Caco-2 (cell line): ENCODE measurements at regions of chr3 and their contacts with region 1.

Region 1: DNA sequence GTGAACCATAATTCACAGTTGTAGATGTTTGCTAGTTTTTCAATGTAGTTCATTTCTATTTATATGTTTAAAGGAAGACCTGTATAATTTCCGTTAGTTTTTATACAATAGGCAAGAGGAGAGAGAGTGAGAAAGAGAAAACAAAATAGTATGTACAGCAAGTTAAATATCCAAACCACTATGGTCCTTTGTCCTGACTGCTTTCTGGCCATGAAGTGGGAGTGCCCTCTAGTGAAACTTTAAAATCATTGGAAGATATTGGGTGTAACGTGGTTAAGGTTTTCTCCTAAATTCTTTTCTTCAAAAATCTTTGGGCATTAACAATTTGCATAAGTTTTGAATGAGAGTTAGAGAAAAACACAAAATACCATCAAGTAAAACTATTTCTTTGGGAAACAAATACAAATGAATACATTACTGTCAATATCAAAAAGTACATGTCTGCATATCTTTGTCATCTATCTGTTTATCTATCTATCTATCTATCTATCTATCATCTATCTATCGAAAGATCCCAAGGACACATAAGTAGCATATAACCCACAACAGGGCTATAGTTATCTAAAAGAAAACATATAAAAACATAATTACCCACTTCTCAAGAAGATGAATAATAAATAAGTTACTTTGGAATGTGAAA is 534.6 kb upstream of the ATP11B start:
- DNase-seq: peak in 1 of 2 experiments; percentile 58
- H3K4me3 ChIP-seq: no peak overlapping the region
- H3K4me3 Mint-ChIP-seq: no peak overlapping the region
- H3K27ac Mint-ChIP-seq: no peak overlapping the region
- H3K4me1 ChIP-seq: no peaks in the 10 kb centered on the region; the same call in 1 of the 2 replicates
- H3K4me1 Mint-ChIP-seq: peaks cover 6% of the 10 kb centered on the region
- H3K27me3 ChIP-seq: no peaks in the 10 kb centered on the region
- H3K27me3 Mint-ChIP-seq: no peaks in the 10 kb centered on the region
- CTCF ChIP-seq: peak; percentile 66 to 68

Region 2: GRCh38 chr3:181726351-181727330 is 532.0 kb before region 1 on chr3:
- CTCF ChIA-PET with region 1: no interaction called
- POLR2A ChIA-PET with region 1: no interaction called
- intact Hi-C with region 1: loop called (anchors 1 kb)
- DNase-seq: peak; percentile 55 to 79
- H3K4me3 ChIP-seq: peak overlapping the region; percentile 38
- H3K4me3 Mint-ChIP-seq: peak overlapping the region; percentile 84
- H3K27ac Mint-ChIP-seq: peak overlapping the region; percentile 67
- H3K4me1 ChIP-seq: peaks cover 10% of the 10 kb centered on the region
- H3K4me1 Mint-ChIP-seq: no peaks in the 10 kb centered on the region
- H3K27me3 ChIP-seq: no peaks in the 10 kb centered on the region
- H3K27me3 Mint-ChIP-seq: no peaks in the 10 kb centered on the region
- CTCF ChIP-seq: peak; percentile 34 to 65

Region 3: DNA sequence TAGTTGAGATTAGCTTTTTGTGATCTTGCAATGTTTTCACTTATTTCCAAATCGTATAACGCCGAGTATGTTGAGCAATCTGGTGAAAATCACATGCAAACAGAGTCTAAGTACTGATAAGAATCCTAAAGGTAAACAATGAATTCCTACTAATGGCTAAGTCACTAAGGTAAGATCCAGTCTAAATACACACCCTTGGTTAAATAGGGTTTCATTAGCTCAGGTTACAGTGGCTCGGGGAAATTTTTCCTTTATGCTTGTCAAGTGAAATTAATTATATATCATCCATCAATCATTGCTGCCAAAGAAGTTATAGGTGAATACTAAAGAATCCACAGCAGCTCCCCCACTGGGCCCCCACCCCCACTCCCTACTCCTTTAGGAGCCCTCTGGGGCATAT is 407.6 kb before region 1 on chr3:
- CTCF ChIA-PET with region 1: no interaction called
- POLR2A ChIA-PET with region 1: no interaction called
- intact Hi-C with region 1: loop called (anchors 1 kb)
- DNase-seq: peak; percentile 61 to 69
- H3K4me3 ChIP-seq: no peak overlapping the region
- H3K4me3 Mint-ChIP-seq: peak overlapping the region; percentile 35
- H3K27ac Mint-ChIP-seq: peak overlapping the region; percentile 87
- H3K4me1 ChIP-seq: peaks cover 26% of the 10 kb centered on the region
- H3K4me1 Mint-ChIP-seq: peaks cover 22% of the 10 kb centered on the region
- H3K27me3 ChIP-seq: no peaks in the 10 kb centered on the region
- H3K27me3 Mint-ChIP-seq: no peaks in the 10 kb centered on the region
- CTCF ChIP-seq: no peak

Region 4: GRCh38 chr3:181872889-181873288 is 385.8 kb before region 1 on chr3:
- CTCF ChIA-PET with region 1: no interaction called
- POLR2A ChIA-PET with region 1: no interaction called
- intact Hi-C with region 1: loop called (anchors 5 kb)
- DNase-seq: no peak
- H3K4me3 ChIP-seq: no peak overlapping the region
- H3K4me3 Mint-ChIP-seq: no peak overlapping the region
- H3K27ac Mint-ChIP-seq: no peak overlapping the region
- H3K4me1 ChIP-seq: peaks cover 10% of the 10 kb centered on the region
- H3K4me1 Mint-ChIP-seq: peaks cover 17% of the 10 kb centered on the region
- H3K27me3 ChIP-seq: no peaks in the 10 kb centered on the region
- H3K27me3 Mint-ChIP-seq: no peaks in the 10 kb centered on the region
- CTCF ChIP-seq: no peak

Region 5: GRCh38 chr3:181948286-181948685 is 310.4 kb before region 1 on chr3:
- CTCF ChIA-PET with region 1: no interaction called
- POLR2A ChIA-PET with region 1: no interaction called
- intact Hi-C with region 1: loop called (anchors 1 kb)
- DNase-seq: peak in 1 of 2 experiments; percentile 25
- H3K4me3 ChIP-seq: no peak overlapping the region
- H3K4me3 Mint-ChIP-seq: no peak overlapping the region
- H3K27ac Mint-ChIP-seq: no peak overlapping the region
- H3K4me1 ChIP-seq: peaks cover 8% of the 10 kb centered on the region
- H3K4me1 Mint-ChIP-seq: peaks cover 10% of the 10 kb centered on the region
- H3K27me3 ChIP-seq: no peaks in the 10 kb centered on the region
- H3K27me3 Mint-ChIP-seq: no peaks in the 10 kb centered on the region
- CTCF ChIP-seq: peak in 1 of 2 experiments; percentile 34

Region 6: DNA sequence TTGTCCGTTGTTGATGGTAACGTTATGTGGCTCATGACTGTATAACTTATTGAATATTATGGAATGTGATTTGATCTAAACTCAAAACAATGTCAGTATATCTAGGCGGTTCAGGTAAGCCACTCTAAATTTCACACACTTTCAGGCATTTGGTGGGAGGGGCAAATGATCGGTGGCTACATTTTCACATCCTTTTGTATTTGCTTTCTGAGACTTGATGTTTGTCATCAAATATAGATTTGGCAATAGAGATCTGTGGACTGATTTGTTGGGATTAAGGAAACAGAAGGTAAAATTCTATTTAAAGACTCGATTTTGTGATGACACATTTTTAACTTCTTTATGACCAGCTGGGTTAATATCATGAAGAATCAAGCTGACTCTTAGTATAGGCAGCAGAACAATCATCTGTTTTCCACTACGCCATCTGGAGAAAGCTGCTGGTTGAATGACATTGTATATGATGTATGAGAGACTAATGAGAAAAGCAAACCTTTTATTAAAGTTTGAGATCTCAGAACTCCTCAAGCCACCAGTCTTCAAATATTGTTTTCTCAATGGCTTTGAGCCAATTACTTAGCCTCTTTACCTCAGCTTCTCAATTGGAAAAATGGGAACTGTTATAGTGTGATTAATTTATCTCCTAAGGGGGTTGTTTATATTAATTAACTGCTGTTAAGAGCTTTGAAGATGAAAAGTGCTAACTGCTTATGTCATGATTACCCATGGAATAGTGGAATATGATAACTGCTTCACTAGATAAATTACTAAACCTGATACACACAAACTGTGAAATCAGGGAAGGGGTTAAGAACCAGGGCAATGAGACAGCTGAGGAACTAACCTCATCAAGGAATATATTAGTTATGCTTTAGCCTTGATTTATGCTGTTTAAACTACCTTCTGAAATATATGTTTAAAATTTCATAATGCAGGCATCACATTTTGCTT is 217.0 kb before region 1 on chr3:
- CTCF ChIA-PET with region 1: no interaction called
- POLR2A ChIA-PET with region 1: no interaction called
- intact Hi-C with region 1: no loop called
- DNase-seq: no peak
- H3K4me3 ChIP-seq: no peak overlapping the region
- H3K4me3 Mint-ChIP-seq: no peak overlapping the region
- H3K27ac Mint-ChIP-seq: no peak overlapping the region
- H3K4me1 ChIP-seq: no peaks in the 10 kb centered on the region
- H3K4me1 Mint-ChIP-seq: no peaks in the 10 kb centered on the region
- H3K27me3 ChIP-seq: no peaks in the 10 kb centered on the region
- H3K27me3 Mint-ChIP-seq: no peaks in the 10 kb centered on the region
- CTCF ChIP-seq: no peak

Region 7: GRCh38 chr3:182149594-182149993 is 109.1 kb before region 1 on chr3:
- CTCF ChIA-PET with region 1: no interaction called
- POLR2A ChIA-PET with region 1: no interaction called
- intact Hi-C with region 1: no loop called
- DNase-seq: no peak
- H3K4me3 ChIP-seq: no peak overlapping the region
- H3K4me3 Mint-ChIP-seq: no peak overlapping the region
- H3K27ac Mint-ChIP-seq: no peak overlapping the region
- H3K4me1 ChIP-seq: peaks cover 18% of the 10 kb centered on the region
- H3K4me1 Mint-ChIP-seq: peaks cover 7% of the 10 kb centered on the region
- H3K27me3 ChIP-seq: no peaks in the 10 kb centered on the region
- H3K27me3 Mint-ChIP-seq: no peaks in the 10 kb centered on the region
- CTCF ChIP-seq: no peak

Region 8: DNA sequence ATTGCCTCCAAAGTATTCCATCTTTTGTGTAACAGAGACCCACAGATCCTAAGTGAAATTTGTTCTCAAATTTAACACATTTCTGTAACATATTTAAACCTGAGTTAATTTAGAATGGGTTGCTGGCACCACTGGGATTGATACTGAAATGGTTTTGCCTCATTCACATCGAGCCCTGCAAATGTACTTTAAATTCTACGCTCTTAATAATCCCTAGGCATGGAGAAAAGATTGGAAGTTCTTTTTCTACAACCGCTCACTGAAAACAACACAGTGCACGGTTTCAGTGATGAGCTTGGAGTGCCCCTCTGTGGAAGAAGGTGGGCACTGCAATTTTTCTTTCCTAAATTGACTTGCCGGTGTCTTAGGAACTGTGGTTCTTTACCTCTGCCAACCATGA is 424.8 kb after region 1 on chr3:
- CTCF ChIA-PET with region 1: no interaction called
- POLR2A ChIA-PET with region 1: no interaction called
- intact Hi-C with region 1: loop called (anchors 2 kb)
- DNase-seq: peak; percentile 49 to 74
- H3K4me3 ChIP-seq: no peak overlapping the region
- H3K4me3 Mint-ChIP-seq: peak overlapping the region; percentile 74
- H3K27ac Mint-ChIP-seq: no peak overlapping the region
- H3K4me1 ChIP-seq: peaks cover 12% of the 10 kb centered on the region; the same call in 1 of the 2 replicates
- H3K4me1 Mint-ChIP-seq: peaks cover 27% of the 10 kb centered on the region
- H3K27me3 ChIP-seq: no peaks in the 10 kb centered on the region
- H3K27me3 Mint-ChIP-seq: peaks cover 3% of the 10 kb centered on the region
- CTCF ChIP-seq: peak; percentile 71 to 83